PC-3 (cell line): ENCODE measurements at regions of chr10 and their contacts with region 1.

Region 1: DNA sequence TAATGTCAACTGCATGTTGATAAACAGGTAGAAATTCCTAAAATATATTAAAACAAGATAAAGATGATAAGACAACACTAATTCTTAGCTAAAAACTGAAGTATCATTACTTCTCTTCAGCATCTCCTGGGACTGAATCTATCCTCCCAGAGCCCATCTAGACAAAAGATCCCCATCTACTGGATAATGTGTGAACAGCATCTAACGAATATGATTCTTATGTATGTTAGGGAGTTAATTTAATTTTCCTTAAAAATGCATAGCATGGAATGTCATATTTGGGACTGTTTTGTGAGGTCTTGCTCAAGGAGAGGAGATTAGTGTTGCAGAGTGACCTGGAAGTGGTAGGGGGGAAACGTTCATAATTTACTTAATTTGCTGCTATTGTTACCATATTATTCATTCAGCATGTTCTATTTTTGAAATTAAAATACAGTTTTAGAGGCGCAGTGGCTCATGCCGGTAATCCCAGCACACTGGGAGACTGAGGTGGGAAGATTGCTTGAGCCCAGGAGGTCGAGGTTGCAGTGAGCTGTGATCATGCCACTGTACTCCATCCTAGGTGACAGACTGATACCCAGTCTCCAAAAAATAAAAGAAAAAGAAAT is 305.1 kb upstream of the CSTF2T start:
- DNase-seq: peak; percentile 94
- ATAC-seq: peak; percentile 89
- H3K4me3 ChIP-seq: no peak overlapping the region
- H3K27ac ChIP-seq: no peak overlapping the region
- H3K4me1 ChIP-seq: no peaks in the 10 kb centered on the region
- H3K27me3 ChIP-seq: peaks cover 15% of the 10 kb centered on the region; the same call in 1 of the 2 replicates
- CTCF ChIP-seq: peak; percentile 96

Region 2: GRCh38 chr10:51422311-51423120 is 581.9 kb before region 1 on chr10:
- CTCF ChIA-PET with region 1: no interaction called
- POLR2A ChIA-PET with region 1: no interaction called
- intact Hi-C with region 1: loop called (anchors 5 kb)
- DNase-seq: peak; percentile 95
- ATAC-seq: peak; percentile 95
- H3K4me3 ChIP-seq: no peak overlapping the region
- H3K27ac ChIP-seq: no peak overlapping the region
- H3K4me1 ChIP-seq: no peaks in the 10 kb centered on the region; the same call in 1 of the 2 replicates
- H3K27me3 ChIP-seq: no peaks in the 10 kb centered on the region
- CTCF ChIP-seq: peak; percentile 100

Region 3: DNA sequence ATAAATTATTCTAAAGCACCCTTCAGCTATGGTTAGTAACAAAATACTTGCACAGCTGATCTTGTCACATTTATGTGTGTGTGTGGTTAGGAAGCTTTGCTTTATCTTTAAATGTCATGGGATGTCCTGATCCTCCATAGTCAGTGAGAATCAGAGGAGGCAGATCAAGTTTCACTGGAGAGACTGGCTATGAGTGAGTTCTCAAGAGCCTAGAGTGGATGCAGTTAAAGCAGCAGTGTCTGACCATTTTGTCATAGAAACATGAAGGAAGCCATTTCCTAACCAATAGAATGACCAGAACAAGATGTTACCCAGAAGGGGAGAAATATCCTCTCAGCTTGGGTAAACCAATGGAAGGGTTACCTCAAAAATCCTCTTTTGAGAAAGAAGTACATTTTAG is 102.5 kb after region 1 on chr10:
- CTCF ChIA-PET with region 1: no interaction called
- POLR2A ChIA-PET with region 1: no interaction called
- intact Hi-C with region 1: no loop called
- DNase-seq: peak; percentile 21
- ATAC-seq: no peak; the same call in 1 of the 2 replicates
- H3K4me3 ChIP-seq: no peak overlapping the region
- H3K27ac ChIP-seq: no peak overlapping the region
- H3K4me1 ChIP-seq: no peaks in the 10 kb centered on the region
- H3K27me3 ChIP-seq: no peaks in the 10 kb centered on the region; the same call in 1 of the 2 replicates
- CTCF ChIP-seq: no peak